ENCODE measurements at regions of chr10 and their contacts with region 1.

Region 1: DNA sequence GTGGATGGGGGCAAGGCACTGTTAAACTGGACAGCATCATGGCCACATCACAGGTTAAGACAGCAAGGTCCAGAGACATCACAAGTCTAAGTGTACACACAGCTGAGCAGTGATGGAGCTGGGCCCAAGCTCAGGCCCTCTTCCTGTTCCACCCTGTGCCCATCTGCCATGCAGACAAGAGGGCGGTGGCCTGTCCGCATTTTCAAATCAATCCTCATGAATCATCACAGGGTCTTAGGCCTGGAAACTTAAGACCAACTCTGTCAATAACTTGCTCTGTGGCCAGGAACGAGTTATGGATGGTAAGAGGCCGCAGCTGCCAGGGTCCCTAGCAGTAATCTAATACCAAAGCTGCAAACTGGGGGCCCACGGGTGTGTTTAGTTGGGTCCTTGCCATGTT is 3.2 kb downstream of the C10orf105 start:
- DNase-seq: no peak
- ATAC-seq: peak; percentile 20; the same call in 1 of the 2 replicates
- H3K4me3 ChIP-seq: no peak overlapping the region
- H3K27ac ChIP-seq: no peak overlapping the region
- H3K4me1 ChIP-seq: peaks cover 7% of the 10 kb centered on the region
- H3K27me3 ChIP-seq: no peaks in the 10 kb centered on the region
- CTCF ChIP-seq: no peak

Region 2: DNA sequence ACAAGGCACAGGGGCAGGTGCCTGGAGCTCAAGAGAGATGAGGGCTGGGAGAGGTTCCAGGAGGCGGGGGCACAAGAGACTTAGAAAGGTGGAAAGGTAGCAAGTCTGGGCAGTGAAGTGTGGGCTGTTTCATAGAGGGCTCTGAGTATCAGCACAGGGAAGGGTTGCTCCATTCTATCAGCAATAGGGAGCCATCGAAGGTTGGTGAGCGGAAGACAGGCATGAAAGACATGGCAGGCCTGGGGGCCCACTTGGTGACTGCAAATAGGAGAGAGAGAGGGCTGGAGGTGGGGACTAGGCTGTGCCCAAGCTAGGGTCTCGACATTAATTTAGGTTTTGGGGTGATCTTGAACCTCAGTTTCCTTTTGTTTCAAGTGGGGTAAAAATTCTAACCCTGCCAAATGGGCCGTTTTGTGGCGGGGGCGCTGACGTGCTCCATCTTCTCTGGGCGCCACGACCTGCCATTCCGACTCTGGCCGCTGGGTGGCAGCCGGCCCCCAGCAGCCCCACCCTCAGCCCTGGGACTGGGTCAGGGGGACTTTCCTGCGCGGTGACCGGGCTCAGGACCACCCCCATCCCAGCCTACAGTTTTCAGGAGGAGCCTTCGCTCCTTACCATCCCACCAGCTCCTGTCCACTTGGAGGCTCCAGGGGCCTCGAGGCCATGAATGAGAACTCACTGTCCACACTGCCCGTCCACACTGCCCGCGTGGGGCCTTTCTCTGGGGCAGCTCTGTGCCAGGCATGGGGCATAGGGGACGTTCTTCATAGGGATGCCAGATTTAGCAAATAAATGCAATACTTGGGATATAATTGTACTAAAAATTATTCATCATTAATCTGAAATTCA is 790.8 kb before region 1 on chr10:
- CTCF ChIA-PET with region 1: no interaction called
- POLR2A ChIA-PET with region 1: interaction called, 10 read pairs
- in situ Hi-C with region 1: no loop called
- intact Hi-C with region 1: no loop called
- DNase-seq: no peak
- ATAC-seq: peak; percentile 87
- H3K4me3 ChIP-seq: no peak overlapping the region
- H3K27ac ChIP-seq: no peak overlapping the region
- H3K4me1 ChIP-seq: no peaks in the 10 kb centered on the region
- H3K27me3 ChIP-seq: peaks cover 14% of the 10 kb centered on the region; the same call in 1 of the 2 replicates
- CTCF ChIP-seq: peak; percentile 100

Region 3: GRCh38 chr10:71772832-71773377 is 56.5 kb after region 1 on chr10:
- CTCF ChIA-PET with region 1: interaction called, 11 read pairs
- POLR2A ChIA-PET with region 1: no interaction called
- in situ Hi-C with region 1: no loop called
- intact Hi-C with region 1: no loop called
- DNase-seq: no peak
- ATAC-seq: peak; percentile 66
- H3K4me3 ChIP-seq: peak overlapping the region; percentile 60 to 64
- H3K27ac ChIP-seq: peak overlapping the region; percentile 68
- H3K4me1 ChIP-seq: peaks cover 56% of the 10 kb centered on the region
- H3K27me3 ChIP-seq: no peaks in the 10 kb centered on the region
- CTCF ChIP-seq: no peak

Region 4: GRCh38 chr10:71795248-71795647 is 78.8 kb after region 1 on chr10:
- CTCF ChIA-PET with region 1: no interaction called
- POLR2A ChIA-PET with region 1: no interaction called
- in situ Hi-C with region 1: no loop called
- intact Hi-C with region 1: no loop called
- DNase-seq: no peak
- ATAC-seq: no peak
- H3K4me3 ChIP-seq: no peak overlapping the region
- H3K27ac ChIP-seq: no peak overlapping the region
- H3K4me1 ChIP-seq: no peaks in the 10 kb centered on the region
- H3K27me3 ChIP-seq: no peaks in the 10 kb centered on the region
- CTCF ChIP-seq: no peak

Region 5: GRCh38 chr10:71835671-71836595 is 119.5 kb after region 1 on chr10:
- CTCF ChIA-PET with region 1: no interaction called
- POLR2A ChIA-PET with region 1: no interaction called
- in situ Hi-C with region 1: no loop called
- intact Hi-C with region 1: no loop called
- DNase-seq: no peak
- ATAC-seq: peak; percentile 1; the same call in 1 of the 2 replicates
- H3K4me3 ChIP-seq: peak overlapping the region in 1 of 2 experiments; percentile 2; a peak in 1 of 4 replicates
- H3K27ac ChIP-seq: peak overlapping the region; percentile 92
- H3K4me1 ChIP-seq: peaks cover 82% of the 10 kb centered on the region
- H3K27me3 ChIP-seq: no peaks in the 10 kb centered on the region
- CTCF ChIP-seq: no peak